ENCODE measurements at regions of chr5 and their contacts with region 1.

Region 1: GRCh38 chr5:34486160-34486848 is 169.8 kb upstream of the RAI14 start:
- DNase-seq: peak; percentile 88
- ATAC-seq: peak; percentile 46
- H3K4me3 Mint-ChIP-seq: no peak overlapping the region
- H3K27ac Mint-ChIP-seq: 0 out of 2 replicates have a peak overlapping the region, but pooled peaks have one; percentile 13
- H3K4me1 Mint-ChIP-seq: peaks cover 66% of the 10 kb centered on the region
- H3K27me3 Mint-ChIP-seq: peaks cover 6% of the 10 kb centered on the region
- CTCF ChIP-seq: peak; percentile 71

Region 2: GRCh38 chr5:34474573-34475021 is 11.7 kb before region 1 on chr5:
- CTCF ChIA-PET with region 1: interaction called, 12 read pairs
- POLR2A ChIA-PET with region 1: no interaction called
- DNase-seq: no peak
- ATAC-seq: peak; percentile 58
- H3K4me3 Mint-ChIP-seq: peak overlapping the region; percentile 45; the same call in 1 of the 2 replicates
- H3K27ac Mint-ChIP-seq: peak overlapping the region; percentile 98
- H3K4me1 Mint-ChIP-seq: peaks cover 25% of the 10 kb centered on the region
- H3K27me3 Mint-ChIP-seq: peaks cover 9% of the 10 kb centered on the region
- CTCF ChIP-seq: peak; percentile 90

Region 3: DNA sequence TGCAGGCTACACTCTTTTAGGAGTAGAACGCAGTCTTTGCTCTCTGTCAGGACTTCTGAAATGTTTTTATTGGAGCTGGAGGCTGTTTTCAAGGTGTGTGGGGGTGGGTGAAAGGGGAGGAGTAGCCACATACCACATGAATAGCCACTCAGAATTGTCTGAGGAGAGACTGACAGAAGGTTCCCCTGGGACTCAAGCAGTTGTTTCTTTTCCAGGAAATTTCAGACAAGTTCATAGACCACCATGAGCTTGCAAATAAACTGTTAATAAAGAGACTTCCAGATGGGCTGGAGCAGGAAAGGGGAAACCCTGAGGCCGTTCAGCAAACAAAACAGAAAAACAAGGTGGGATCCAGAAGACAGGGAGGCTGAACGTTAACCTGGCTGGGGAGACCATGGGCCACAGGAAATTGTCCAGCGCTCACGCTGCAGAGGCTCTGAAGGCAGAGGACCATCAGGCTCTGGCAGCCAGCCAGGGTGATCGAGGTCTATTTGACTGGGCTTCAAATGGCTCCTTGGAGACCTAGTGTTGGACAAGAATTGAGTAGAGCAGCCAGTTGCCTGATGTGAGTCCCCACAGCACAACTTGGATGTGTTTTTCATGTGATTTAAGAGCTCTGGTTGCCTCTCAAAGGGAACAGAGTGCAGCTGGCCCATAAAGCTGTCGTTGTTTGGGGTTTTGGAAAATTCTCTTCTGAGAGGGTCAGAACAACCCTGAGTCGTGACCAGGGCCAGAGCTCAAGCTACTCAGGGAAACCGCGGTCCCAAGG is 10.6 kb after region 1 on chr5:
- CTCF ChIA-PET with region 1: interaction called, 21 read pairs
- POLR2A ChIA-PET with region 1: no interaction called
- DNase-seq: no peak
- ATAC-seq: peak; percentile 15
- H3K4me3 Mint-ChIP-seq: no peak overlapping the region
- H3K27ac Mint-ChIP-seq: no peak overlapping the region
- H3K4me1 Mint-ChIP-seq: peaks cover 22% of the 10 kb centered on the region
- H3K27me3 Mint-ChIP-seq: no peaks in the 10 kb centered on the region
- CTCF ChIP-seq: no peak

Region 4: DNA sequence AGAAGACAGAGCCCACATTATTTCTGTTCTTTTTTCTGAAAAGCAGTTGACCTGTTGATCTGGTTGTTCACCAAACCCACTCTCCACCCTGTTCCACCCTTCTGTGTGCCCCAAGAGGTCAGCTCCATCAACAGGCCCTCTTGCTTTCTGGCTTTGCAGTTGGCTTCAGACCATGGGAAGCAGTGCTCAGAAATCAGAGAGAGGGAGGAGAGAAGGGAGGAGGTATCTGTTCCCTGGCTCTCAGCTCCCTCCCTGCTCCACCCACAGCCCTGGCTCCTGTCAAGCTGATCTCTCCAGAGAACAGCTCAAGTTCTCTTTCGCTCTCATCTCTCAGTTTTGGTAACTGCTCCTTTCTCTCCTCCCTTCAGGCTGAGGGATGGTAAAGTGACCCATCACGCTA is 25.6 kb after region 1 on chr5:
- CTCF ChIA-PET with region 1: no interaction called
- POLR2A ChIA-PET with region 1: no interaction called
- DNase-seq: no peak
- ATAC-seq: peak; percentile 83
- H3K4me3 Mint-ChIP-seq: no peak overlapping the region
- H3K27ac Mint-ChIP-seq: peak overlapping the region; percentile 6; the same call in 1 of the 2 replicates
- H3K4me1 Mint-ChIP-seq: peaks cover 27% of the 10 kb centered on the region
- H3K27me3 Mint-ChIP-seq: no peaks in the 10 kb centered on the region
- CTCF ChIP-seq: no peak

Region 5: DNA sequence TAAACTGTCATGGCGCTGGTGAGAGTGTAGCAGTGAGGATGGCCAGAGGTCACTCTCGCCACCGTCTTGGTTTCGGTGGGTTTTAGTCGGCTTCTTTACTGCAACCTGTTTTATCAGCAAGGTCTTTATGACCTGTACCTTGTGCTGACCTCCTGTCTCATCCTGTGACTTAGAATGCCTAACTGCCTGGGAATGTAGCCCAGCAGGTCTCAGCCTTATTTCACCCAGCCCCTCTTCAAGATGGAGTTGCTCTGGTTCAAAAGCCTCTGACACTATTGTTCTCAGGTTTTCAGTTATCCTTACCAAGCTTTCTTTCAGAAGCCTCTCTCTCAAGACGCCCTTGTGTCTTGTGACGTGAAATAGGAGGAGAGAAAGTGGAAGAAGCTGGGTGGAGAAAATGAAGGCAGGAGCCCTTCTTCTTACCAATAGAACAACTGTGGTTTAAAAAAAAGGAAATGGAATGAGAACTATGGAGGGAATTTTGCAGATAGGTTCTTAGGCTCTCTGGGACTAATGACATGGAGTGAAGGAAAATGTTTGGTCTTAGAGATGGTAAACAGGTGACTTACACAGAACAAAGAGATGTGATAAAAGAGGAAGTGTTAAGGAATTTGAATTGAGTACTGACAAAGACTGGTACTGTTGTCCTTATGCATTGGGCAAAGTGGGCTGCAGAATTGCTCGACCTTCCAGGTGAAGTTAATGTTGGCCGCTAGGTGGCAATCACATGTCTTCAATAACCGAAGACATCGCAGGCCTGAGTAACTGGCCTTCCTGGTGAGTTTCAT is 36.5 kb after region 1 on chr5:
- CTCF ChIA-PET with region 1: interaction called, 10 read pairs
- POLR2A ChIA-PET with region 1: no interaction called
- DNase-seq: peak; percentile 80
- ATAC-seq: peak; percentile 92
- H3K4me3 Mint-ChIP-seq: no peak overlapping the region
- H3K27ac Mint-ChIP-seq: peak overlapping the region; percentile 90
- H3K4me1 Mint-ChIP-seq: peaks cover 28% of the 10 kb centered on the region
- H3K27me3 Mint-ChIP-seq: no peaks in the 10 kb centered on the region
- CTCF ChIP-seq: peak; percentile 73

Region 6: GRCh38 chr5:34626036-34626754 is 139.9 kb after region 1 on chr5:
- CTCF ChIA-PET with region 1: no interaction called
- POLR2A ChIA-PET with region 1: no interaction called
- DNase-seq: no peak
- ATAC-seq: no peak
- H3K4me3 Mint-ChIP-seq: no peak overlapping the region
- H3K27ac Mint-ChIP-seq: no peak overlapping the region
- H3K4me1 Mint-ChIP-seq: peaks cover 14% of the 10 kb centered on the region
- H3K27me3 Mint-ChIP-seq: peaks cover 5% of the 10 kb centered on the region
- CTCF ChIP-seq: no peak

Region 7: DNA sequence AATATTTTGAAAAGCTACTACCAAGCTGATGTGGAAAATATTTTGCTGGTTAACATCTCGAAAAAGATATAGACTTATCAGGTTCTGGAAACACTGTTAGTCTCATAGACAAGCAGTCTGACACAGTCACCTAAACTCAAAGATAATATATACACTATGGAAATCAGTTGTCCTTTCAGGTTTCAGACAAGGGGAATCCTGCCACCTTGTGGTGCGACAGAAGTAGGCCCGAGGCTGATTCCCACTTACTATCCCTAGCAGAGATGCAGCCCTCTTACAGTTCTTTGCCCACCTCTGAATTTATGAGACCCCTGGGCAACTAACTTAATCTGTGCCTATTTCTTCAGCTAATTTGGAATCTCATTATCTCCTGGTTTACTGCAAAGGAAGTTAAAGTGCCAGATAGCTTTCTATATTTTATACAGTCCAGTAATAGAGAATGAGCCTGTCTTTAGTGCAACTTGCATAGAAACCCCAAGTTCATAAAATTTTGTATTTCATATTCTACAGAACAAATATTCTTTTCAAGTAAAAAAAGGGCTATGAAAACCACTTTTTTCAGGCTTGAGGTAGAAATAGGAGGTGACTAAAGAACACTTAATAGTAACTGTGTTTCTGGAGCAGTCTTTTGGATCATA is 412.1 kb after region 1 on chr5:
- CTCF ChIA-PET with region 1: interaction called, 30 read pairs
- POLR2A ChIA-PET with region 1: no interaction called
- DNase-seq: peak; percentile 67
- ATAC-seq: peak; percentile 91
- H3K4me3 Mint-ChIP-seq: no peak overlapping the region
- H3K27ac Mint-ChIP-seq: no peak overlapping the region; the same call in 1 of the 2 replicates
- H3K4me1 Mint-ChIP-seq: peaks cover 24% of the 10 kb centered on the region
- H3K27me3 Mint-ChIP-seq: no peaks in the 10 kb centered on the region
- CTCF ChIP-seq: peak; percentile 66

Region 8: DNA sequence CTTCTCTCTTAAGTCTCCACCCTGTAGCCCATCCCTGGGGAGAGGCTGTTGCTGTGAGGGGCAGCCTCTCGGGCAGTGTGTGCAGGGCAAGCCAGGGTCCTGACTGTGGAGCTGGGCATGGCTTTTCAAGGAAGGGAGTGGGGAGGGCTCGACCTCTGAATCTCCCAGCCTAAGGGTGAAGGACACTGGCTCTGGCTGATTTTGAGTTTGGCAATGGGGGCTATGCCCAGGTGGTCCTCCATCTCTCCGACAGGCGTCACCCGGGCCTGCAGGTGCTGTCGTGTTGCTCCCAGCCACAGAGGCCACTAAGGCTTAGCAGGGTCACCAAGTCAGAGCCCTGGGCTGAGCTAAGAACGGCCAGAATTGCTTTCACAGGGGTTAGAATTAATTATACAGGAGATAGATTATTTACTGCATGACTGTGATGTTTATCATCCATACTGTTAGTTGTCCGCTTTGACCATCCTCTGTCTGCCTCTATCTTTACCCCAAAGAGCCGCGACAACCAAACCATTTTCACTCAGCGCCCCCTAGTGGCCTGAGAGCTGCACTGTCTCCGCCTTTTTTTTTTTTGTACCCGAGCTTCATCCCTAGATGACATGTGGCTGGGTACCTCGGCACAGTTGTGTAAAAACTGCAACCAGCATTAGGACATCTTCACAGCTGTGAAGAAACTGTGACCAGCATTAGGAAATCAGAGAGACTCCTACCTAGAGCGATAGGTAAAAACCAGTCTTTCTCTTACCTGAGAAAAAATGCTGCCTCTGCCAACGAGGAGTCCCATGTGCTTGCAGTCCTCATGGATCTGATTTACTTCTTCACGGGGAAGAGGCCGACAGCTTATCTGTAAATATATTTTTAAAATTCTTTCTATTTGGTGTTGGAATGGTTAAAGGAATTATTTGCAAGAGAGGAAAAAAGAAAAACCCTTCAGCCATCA is 517.0 kb after region 1 on chr5:
- CTCF ChIA-PET with region 1: interaction called, 10 read pairs
- POLR2A ChIA-PET with region 1: no interaction called
- DNase-seq: peak; percentile 66
- ATAC-seq: peak; percentile 85
- H3K4me3 Mint-ChIP-seq: no peak overlapping the region
- H3K27ac Mint-ChIP-seq: no peak overlapping the region
- H3K4me1 Mint-ChIP-seq: peaks cover 18% of the 10 kb centered on the region
- H3K27me3 Mint-ChIP-seq: no peaks in the 10 kb centered on the region; the same call in 1 of the 2 replicates
- CTCF ChIP-seq: peak; percentile 96

Measured in WTC11 (cell line).